ENCODE measurements at regions of chr14 and their contacts with region 1.

Region 1: DNA sequence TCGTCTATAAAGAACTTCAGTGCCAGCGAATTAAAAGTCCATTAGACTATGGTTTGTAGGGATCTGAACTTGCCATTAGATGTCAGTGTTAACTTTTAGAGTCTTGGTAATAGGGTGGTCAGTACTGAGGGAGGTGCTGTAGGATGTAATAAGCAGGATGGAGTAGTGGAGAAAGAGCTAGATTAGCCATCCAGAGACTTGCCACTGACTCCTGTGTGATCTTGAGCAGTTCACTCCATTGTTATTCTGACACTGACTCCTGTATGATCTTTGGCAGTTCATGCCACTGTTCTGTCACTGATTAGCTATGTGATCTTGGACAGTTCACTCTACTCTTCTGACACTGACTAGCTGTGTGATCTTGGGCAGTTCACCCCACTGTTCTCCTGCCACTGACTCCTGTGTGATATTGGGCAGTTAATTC is 133.6 kb downstream of the TTLL5 start:
- DNase-seq: no peak
- H3K4me3 ChIP-seq: no peak overlapping the region
- H3K27ac ChIP-seq: peak overlapping the region in 19 of 59 donors; percentile 5 to 65 (median 39)
- H3K27me3 ChIP-seq: no peaks in the 10 kb centered on the region
- CTCF ChIP-seq: peak in 53 of 56 donors; percentile 12 to 77 (median 50)

Region 2: DNA sequence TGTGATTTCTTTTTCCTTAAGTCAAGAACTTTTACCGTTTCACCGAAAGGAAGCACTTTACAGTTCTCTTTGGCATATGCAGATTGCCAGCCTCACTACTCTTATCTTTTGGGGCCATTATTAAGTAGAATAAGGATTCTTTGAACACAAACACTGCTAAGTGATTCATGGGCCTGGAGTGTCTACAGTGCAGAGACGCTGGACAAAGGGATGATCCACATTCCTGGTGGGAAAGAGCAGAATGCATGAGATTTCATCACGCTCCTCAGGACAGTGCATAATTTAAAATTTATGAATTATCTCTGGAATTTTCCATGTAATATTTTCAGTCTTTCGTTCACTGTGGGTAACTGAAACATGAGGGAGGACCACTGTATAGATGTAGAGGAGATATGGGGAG is 43.3 kb before region 1 on chr14:
- intact Hi-C with region 1: no loop called
- DNase-seq: no peak
- H3K4me3 ChIP-seq: no peak overlapping the region
- H3K27ac ChIP-seq: no peak overlapping the region
- H3K27me3 ChIP-seq: no peaks in the 10 kb centered on the region
- CTCF ChIP-seq: no peak

Region 3: DNA sequence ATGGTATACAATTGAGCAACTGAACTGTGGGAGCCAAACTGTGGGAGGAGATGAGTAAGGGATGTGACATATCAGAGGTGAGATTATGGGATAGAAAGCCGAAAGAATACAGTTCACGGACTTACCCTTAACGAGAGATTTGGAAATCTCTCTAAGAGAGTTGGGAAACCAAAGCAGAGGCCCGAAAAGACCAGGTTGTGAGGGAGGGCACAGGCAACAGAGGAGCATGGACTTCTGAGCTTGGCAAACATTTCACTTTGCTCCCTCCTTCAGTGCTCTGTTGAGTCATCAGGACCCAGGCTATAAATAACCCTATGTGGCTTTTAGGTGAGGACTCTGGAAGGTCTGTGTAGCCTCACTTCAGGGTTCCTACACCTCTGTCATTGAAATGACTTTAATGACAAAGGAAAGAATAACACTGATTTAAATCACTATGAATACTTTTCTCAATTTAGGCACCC is 66.6 kb after region 1 on chr14:
- intact Hi-C with region 1: loop called in 1 of 2 experiments (anchors 10 kb)
- DNase-seq: no peak
- H3K4me3 ChIP-seq: no peak overlapping the region
- H3K27ac ChIP-seq: no peak overlapping the region
- H3K27me3 ChIP-seq: no peaks in the 10 kb centered on the region
- CTCF ChIP-seq: no peak

Region 4: GRCh38 chr14:75906676-75907280 is 112.2 kb after region 1 on chr14:
- intact Hi-C with region 1: loop called in 1 of 2 experiments (anchors 5 kb)
- DNase-seq: peak in 5 of 10 donors; percentile 56 to 84 (median 63)
- H3K4me3 ChIP-seq: peak overlapping the region in 1 of 59 donors; percentile 35
- H3K27ac ChIP-seq: peak overlapping the region in 42 of 59 donors; percentile 1 to 78 (median 44)
- H3K27me3 ChIP-seq: no peaks in the 10 kb centered on the region
- CTCF ChIP-seq: peak; percentile 84 to 99 (median 94)

Region 5: DNA sequence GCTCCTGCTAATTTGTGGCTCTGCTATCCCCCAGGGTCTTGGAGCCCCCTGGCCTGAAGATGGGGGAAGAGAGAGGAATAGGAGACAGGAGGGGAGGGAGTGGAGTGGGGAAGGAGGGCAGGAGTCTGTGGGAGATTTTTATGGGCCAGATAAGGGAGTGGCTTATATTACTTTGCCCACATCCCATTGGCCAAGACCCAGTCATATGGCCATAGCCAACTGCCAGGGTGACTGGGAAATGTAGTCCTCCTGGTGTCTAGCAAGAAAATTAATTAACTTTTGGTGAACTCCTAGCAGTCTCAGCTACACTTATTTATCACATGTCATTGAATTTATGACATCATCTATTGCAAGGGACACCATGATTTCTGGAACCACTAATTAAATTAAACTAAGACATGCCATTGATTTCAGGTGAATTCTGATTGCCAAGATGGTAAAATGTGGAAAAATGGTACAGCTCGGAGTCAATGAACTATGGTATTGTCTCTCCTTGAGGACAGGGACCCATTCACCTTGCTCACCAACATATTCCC is 631.6 kb after region 1 on chr14:
- intact Hi-C with region 1: no loop called
- DNase-seq: no peak
- H3K4me3 ChIP-seq: no peak overlapping the region
- H3K27ac ChIP-seq: no peak overlapping the region
- H3K27me3 ChIP-seq: peaks cover 0 to 7% (median 0%) of the 10 kb centered on the region in 45 donors
- CTCF ChIP-seq: no peak

Measured in dorsolateral prefrontal cortex (tissue), 120 donors.